Naive thymus-derived CD4-positive, alpha-beta T cell (primary cell): ENCODE measurements at regions of chr19 and their contacts with region 1.

Region 1: GRCh38 chr19:38618590-38619360 is at the start of gene EIF3K:
- DNase-seq: peak; percentile 94 to 99 (median 96)
- ATAC-seq: peak; percentile 86
- H3K4me3 ChIP-seq: peak within 1 kb of the TSS; percentile 96
- H3K4me3 Mint-ChIP-seq: peak within 1 kb of the TSS; percentile 95 to 100 (median 98)
- H3K27ac ChIP-seq: peak within 1 kb of the TSS; percentile 99
- H3K27ac Mint-ChIP-seq: peak within 1 kb of the TSS; percentile 89 to 100 (median 97)
- H3K4me1 ChIP-seq: peaks cover 33 to 40% of the 10 kb centered on the region in 2 donors
- H3K4me1 Mint-ChIP-seq: peaks cover 38 to 61% (median 44%) of the 10 kb centered on the region in 7 donors
- H3K27me3 ChIP-seq: no peaks in the 10 kb centered on the region
- H3K27me3 Mint-ChIP-seq: no peaks in the 10 kb centered on the region
- total RNA-seq, gene EIF3K: 294 to 405 (median 337) TPM

Region 2: GRCh38 chr19:38245826-38246498 is 372.8 kb before region 1 on chr19:
- CTCF ChIA-PET with region 1: no interaction called
- POLR2A ChIA-PET with region 1: no interaction called
- intact Hi-C with region 1: loop called in 1 of 2 experiments (anchors 10 kb)
- DNase-seq: no peak
- ATAC-seq: no peak
- H3K4me3 ChIP-seq: no peak overlapping the region
- H3K4me3 Mint-ChIP-seq: no peak overlapping the region
- H3K27ac ChIP-seq: no peak overlapping the region
- H3K27ac Mint-ChIP-seq: peak overlapping the region in 1 of 9 donors; percentile 33
- H3K4me1 ChIP-seq: peaks cover 0 to 3% of the 10 kb centered on the region in 2 donors
- H3K4me1 Mint-ChIP-seq: peaks cover 4 to 14% (median 5%) of the 10 kb centered on the region in 7 donors
- H3K27me3 ChIP-seq: no peaks in the 10 kb centered on the region
- H3K27me3 Mint-ChIP-seq: peaks cover 0 to 5% (median 0%) of the 10 kb centered on the region in 5 donors

Region 3: GRCh38 chr19:38544034-38544958 is 74.5 kb before region 1 on chr19:
- CTCF ChIA-PET with region 1: interaction called, 6 read pairs
- POLR2A ChIA-PET with region 1: interaction called, 8 read pairs
- intact Hi-C with region 1: loop called (anchors 1 to 2 kb)
- DNase-seq: peak in 8 of 9 donors; percentile 36 to 68 (median 53)
- ATAC-seq: peak; percentile 88
- H3K4me3 ChIP-seq: no peak overlapping the region
- H3K4me3 Mint-ChIP-seq: peak overlapping the region in 7 of 10 donors; percentile 0 to 65 (median 45)
- H3K27ac ChIP-seq: no peak overlapping the region
- H3K27ac Mint-ChIP-seq: peak overlapping the region in 7 of 9 donors; percentile 1 to 85 (median 13)
- H3K4me1 ChIP-seq: peaks cover 4 to 14% of the 10 kb centered on the region in 2 donors
- H3K4me1 Mint-ChIP-seq: peaks cover 9 to 34% (median 19%) of the 10 kb centered on the region in 7 donors
- H3K27me3 ChIP-seq: no peaks in the 10 kb centered on the region
- H3K27me3 Mint-ChIP-seq: no peaks in the 10 kb centered on the region

Region 4: GRCh38 chr19:38647368-38647965 is 28.7 kb after region 1 on chr19 and contains the start of gene ACTN4:
- CTCF ChIA-PET with region 1: no interaction called
- POLR2A ChIA-PET with region 1: interaction called, 4 read pairs
- intact Hi-C with region 1: loop called (anchors 1 kb)
- DNase-seq: peak; percentile 98 to 100 (median 100)
- ATAC-seq: peak; percentile 98
- H3K4me3 ChIP-seq: peak within 1 kb of the TSS; percentile 85
- H3K4me3 Mint-ChIP-seq: peak within 1 kb of the TSS; percentile 74 to 99 (median 89)
- H3K27ac ChIP-seq: peak within 1 kb of the TSS; percentile 69
- H3K27ac Mint-ChIP-seq: peak within 1 kb of the TSS; percentile 74 to 87 (median 84)
- H3K4me1 ChIP-seq: peaks cover 20 to 27% of the 10 kb centered on the region in 2 donors
- H3K4me1 Mint-ChIP-seq: peaks cover 20 to 52% (median 33%) of the 10 kb centered on the region in 7 donors
- H3K27me3 ChIP-seq: peaks cover 0 to 17% of the 10 kb centered on the region in 2 donors
- H3K27me3 Mint-ChIP-seq: peaks cover 0 to 33% (median 19%) of the 10 kb centered on the region in 5 donors
- total RNA-seq, gene ACTN4: 49.2 to 355 (median 54.4) TPM

Region 5: DNA sequence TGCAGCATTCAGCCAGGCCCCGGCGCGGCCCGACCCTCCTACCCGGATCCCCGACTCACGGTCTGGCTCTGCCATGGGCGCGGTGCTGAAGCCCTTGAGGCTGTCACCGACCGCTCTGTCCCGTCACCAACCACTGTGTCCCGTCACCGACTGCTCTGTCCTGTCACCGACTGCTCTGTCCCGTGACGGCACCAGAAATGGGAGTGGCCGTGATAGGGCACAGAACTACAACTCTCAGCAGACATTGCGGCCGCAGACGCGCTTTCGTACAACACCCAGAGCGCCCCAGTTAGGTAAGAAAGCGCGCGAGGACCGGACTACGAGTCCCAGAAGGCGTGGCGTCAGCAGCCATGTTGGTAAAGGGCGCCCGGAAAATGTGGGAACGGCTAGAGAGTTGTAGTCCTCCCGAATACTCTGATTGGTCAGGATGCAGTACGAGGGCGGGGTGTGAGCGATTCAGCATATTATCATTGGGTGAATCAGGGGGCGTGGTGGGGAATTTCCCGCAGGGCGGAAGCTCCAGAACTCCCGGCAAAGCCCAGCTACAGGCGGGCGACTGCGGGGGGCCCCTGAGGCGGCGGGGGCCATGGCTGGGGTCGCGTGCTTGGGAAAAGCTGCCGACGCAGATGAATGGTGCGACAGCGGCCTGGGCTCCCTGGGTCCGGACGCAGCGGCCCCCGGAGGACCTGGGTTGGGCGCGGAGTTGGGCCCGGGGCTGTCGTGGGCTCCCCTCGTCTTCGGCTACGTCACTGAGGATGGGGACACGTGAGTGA is 280.9 kb after region 1 on chr19 and contains the starts of genes NFKBIB and SIRT2:
- CTCF ChIA-PET with region 1: no interaction called
- POLR2A ChIA-PET with region 1: no interaction called
- intact Hi-C with region 1: loop called (anchors 1 kb)
- DNase-seq: peak; percentile 86 to 100 (median 99)
- ATAC-seq: peak; percentile 93
- H3K4me3 ChIP-seq: peak within 1 kb of the TSS; percentile 74
- H3K4me3 Mint-ChIP-seq: peak within 1 kb of the TSS; percentile 88 to 100 (median 96)
- H3K27ac ChIP-seq: peak within 1 kb of the TSS; percentile 97
- H3K27ac Mint-ChIP-seq: peak within 1 kb of the TSS; percentile 86 to 99 (median 94)
- H3K4me1 ChIP-seq: peaks cover 15 to 29% of the 10 kb centered on the region in 2 donors
- H3K4me1 Mint-ChIP-seq: peaks cover 27 to 74% (median 50%) of the 10 kb centered on the region in 7 donors
- H3K27me3 ChIP-seq: no peaks in the 10 kb centered on the region
- H3K27me3 Mint-ChIP-seq: no peaks in the 10 kb centered on the region
- total RNA-seq, gene NFKBIB: 21.7 to 51.8 (median 34.1) TPM
- total RNA-seq, gene SIRT2: 42.9 to 78.5 (median 54.0) TPM